CD4-positive, alpha-beta T cell (primary cell): ENCODE measurements at regions of chr6 and their contacts with region 1.

Region 1: GRCh38 chr6:7051233-7052114 is 56.3 kb upstream of the RREB1 start:
- DNase-seq: peak; percentile 29 to 79 (median 53)
- ATAC-seq: peak; percentile 73
- H3K4me3 ChIP-seq: peak overlapping the region; percentile 74
- H3K4me3 Mint-ChIP-seq: peak overlapping the region; percentile 82
- H3K27ac ChIP-seq: peak overlapping the region in 1 of 2 donors; percentile 59
- H3K27ac Mint-ChIP-seq: peak overlapping the region; percentile 42
- H3K4me1 ChIP-seq: peaks cover 19% of the 10 kb centered on the region
- H3K4me1 Mint-ChIP-seq: peaks cover 13% of the 10 kb centered on the region
- H3K27me3 ChIP-seq: no peaks in the 10 kb centered on the region
- H3K27me3 Mint-ChIP-seq: no peaks in the 10 kb centered on the region
- CTCF ChIP-seq: no peak

Region 2: DNA sequence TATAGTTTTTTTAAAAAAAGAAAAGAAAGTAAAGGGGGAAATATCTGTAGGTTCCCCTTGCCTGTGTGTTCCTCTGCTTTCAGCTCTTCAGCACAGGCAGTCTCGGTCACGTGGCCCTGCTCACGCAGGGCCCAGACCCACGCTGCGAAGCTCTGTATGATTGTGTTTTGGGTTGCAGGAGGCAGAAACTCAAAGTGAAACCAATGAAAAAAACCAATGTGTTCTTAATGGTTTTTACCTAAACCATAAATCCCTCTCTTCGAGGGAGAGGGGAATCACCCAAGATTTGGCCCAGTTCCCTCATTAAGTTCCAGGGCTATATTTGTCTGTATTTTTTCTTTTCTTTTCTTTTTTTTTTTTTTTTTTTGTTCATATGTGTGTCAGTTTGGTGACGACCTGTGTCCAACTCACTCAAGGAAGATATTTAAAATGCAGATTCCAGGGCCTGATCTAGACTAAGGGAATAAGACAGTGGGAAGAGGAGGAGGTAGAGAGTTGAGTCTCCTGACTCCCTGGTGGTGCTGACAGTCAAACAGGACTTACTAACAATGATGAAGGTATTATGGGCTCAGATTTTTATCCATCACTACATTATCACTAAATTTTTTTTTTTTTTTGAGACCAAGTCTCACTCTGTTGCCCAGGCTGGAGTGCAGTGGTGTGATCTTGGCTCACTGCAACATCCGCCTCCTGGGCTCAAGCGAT is 22.5 kb after region 1 on chr6:
- CTCF ChIA-PET with region 1: no interaction called
- POLR2A ChIA-PET with region 1: interaction called, 10 read pairs
- intact Hi-C with region 1: no loop called
- DNase-seq: peak; percentile 36 to 83 (median 48)
- ATAC-seq: peak; percentile 99
- H3K4me3 ChIP-seq: peak overlapping the region; percentile 27
- H3K4me3 Mint-ChIP-seq: peak overlapping the region; percentile 25
- H3K27ac ChIP-seq: no peak overlapping the region
- H3K27ac Mint-ChIP-seq: peak overlapping the region; percentile 58
- H3K4me1 ChIP-seq: peaks cover 11% of the 10 kb centered on the region
- H3K4me1 Mint-ChIP-seq: peaks cover 12% of the 10 kb centered on the region
- H3K27me3 ChIP-seq: no peaks in the 10 kb centered on the region
- H3K27me3 Mint-ChIP-seq: no peaks in the 10 kb centered on the region
- CTCF ChIP-seq: no peak

Region 3: DNA sequence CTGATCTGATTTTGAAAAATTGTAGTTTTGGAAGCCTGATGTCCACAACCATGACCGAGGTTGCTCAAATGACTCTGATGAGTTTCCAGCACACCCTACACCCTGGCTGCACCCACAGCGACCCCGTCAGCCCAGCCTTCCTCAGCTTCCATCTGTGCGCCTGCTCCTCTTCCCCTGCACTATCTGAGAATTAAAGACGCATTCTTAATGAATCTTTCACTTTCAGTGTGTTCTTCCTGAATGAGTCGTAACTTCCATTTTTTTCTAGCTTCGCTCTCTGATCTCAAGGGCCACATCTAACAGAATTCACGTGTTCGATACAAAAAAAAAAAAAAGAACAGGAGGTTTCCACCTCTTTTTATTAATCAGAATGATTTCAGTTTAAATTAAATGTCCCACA is 35.0 kb after region 1 on chr6:
- CTCF ChIA-PET with region 1: no interaction called
- POLR2A ChIA-PET with region 1: interaction called, 17 read pairs
- intact Hi-C with region 1: loop called in 1 of 2 experiments (anchors 5 kb)
- DNase-seq: peak in 9 of 14 experiments; percentile 10 to 76 (median 43)
- ATAC-seq: peak; percentile 66
- H3K4me3 ChIP-seq: peak overlapping the region; percentile 52
- H3K4me3 Mint-ChIP-seq: peak overlapping the region; percentile 78
- H3K27ac ChIP-seq: peak overlapping the region; percentile 9 to 26
- H3K27ac Mint-ChIP-seq: peak overlapping the region; percentile 70
- H3K4me1 ChIP-seq: peaks cover 20% of the 10 kb centered on the region
- H3K4me1 Mint-ChIP-seq: peaks cover 36% of the 10 kb centered on the region
- H3K27me3 ChIP-seq: no peaks in the 10 kb centered on the region
- H3K27me3 Mint-ChIP-seq: no peaks in the 10 kb centered on the region
- CTCF ChIP-seq: no peak

Region 4: GRCh38 chr6:7261032-7261841 is 209.8 kb after region 1 on chr6:
- CTCF ChIA-PET with region 1: no interaction called
- POLR2A ChIA-PET with region 1: no interaction called
- intact Hi-C with region 1: no loop called
- DNase-seq: peak in 6 of 14 experiments; percentile 8 to 73 (median 38)
- ATAC-seq: peak; percentile 81
- H3K4me3 ChIP-seq: peak overlapping the region; percentile 69
- H3K4me3 Mint-ChIP-seq: peak overlapping the region; percentile 83
- H3K27ac ChIP-seq: no peak overlapping the region
- H3K27ac Mint-ChIP-seq: no peak overlapping the region
- H3K4me1 ChIP-seq: peaks cover 17% of the 10 kb centered on the region
- H3K4me1 Mint-ChIP-seq: peaks cover 20% of the 10 kb centered on the region
- H3K27me3 ChIP-seq: peaks cover 0 to 13% of the 10 kb centered on the region in 2 experiments
- H3K27me3 Mint-ChIP-seq: peaks cover 19% of the 10 kb centered on the region
- CTCF ChIP-seq: no peak